T-cell (primary cell): ENCODE measurements at regions of chr15 and their contacts with region 1.

Region 1: GRCh38 chr15:85289677-85290365 is 90.6 kb upstream of the AKAP13 start:
- DNase-seq: peak in 13 of 35 experiments; percentile 2 to 60 (median 5)
- ATAC-seq: peak in 1 of 4 experiments; percentile 32
- H3K4me3 ChIP-seq: no peak overlapping the region
- H3K4me3 Mint-ChIP-seq: no peak overlapping the region
- H3K27ac ChIP-seq: no peak overlapping the region
- H3K27ac Mint-ChIP-seq: no peak overlapping the region
- H3K4me1 ChIP-seq: no peaks in the 10 kb centered on the region
- H3K4me1 Mint-ChIP-seq: peaks cover 0 to 4% (median 0%) of the 10 kb centered on the region in 3 donors
- H3K27me3 ChIP-seq: peaks cover 0 to 9% of the 10 kb centered on the region in 2 experiments
- H3K27me3 Mint-ChIP-seq: peaks cover 10 to 14% of the 10 kb centered on the region in 2 donors

Region 2: DNA sequence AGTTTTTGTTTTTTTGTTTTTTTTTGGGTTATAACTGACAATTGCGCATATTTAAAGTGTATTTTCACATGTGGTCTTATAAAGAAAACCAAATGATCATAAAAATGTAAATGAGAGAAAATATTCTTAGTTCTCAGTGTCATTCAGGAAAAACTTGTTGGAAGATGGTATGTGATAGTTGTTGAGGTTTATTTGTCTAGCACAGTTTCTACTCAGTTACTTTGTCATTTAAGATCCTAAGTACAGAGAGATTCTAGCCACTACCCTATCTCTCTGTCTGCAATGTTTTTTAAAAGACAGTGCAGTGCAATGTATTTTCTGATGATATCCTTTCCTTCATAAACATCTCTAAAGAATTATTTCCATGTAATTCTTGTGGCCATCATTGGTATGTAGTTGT is 136.7 kb after region 1 on chr15:
- CTCF ChIA-PET with region 1: no interaction called
- POLR2A ChIA-PET with region 1: no interaction called
- DNase-seq: no peak
- ATAC-seq: no peak
- H3K4me3 ChIP-seq: no peak overlapping the region
- H3K4me3 Mint-ChIP-seq: no peak overlapping the region
- H3K27ac ChIP-seq: no peak overlapping the region
- H3K27ac Mint-ChIP-seq: no peak overlapping the region
- H3K4me1 ChIP-seq: peaks cover 3 to 28% of the 10 kb centered on the region in 2 experiments
- H3K4me1 Mint-ChIP-seq: peaks cover 91 to 94% (median 92%) of the 10 kb centered on the region in 3 donors
- H3K27me3 ChIP-seq: no peaks in the 10 kb centered on the region
- H3K27me3 Mint-ChIP-seq: no peaks in the 10 kb centered on the region

Region 3: GRCh38 chr15:85477730-85478129 is 187.9 kb after region 1 on chr15:
- CTCF ChIA-PET with region 1: no interaction called
- POLR2A ChIA-PET with region 1: interaction called in 1 of 2 experiments, 10 read pairs
- DNase-seq: no peak
- ATAC-seq: no peak
- H3K4me3 ChIP-seq: no peak overlapping the region
- H3K4me3 Mint-ChIP-seq: no peak overlapping the region
- H3K27ac ChIP-seq: no peak overlapping the region
- H3K27ac Mint-ChIP-seq: peak overlapping the region; percentile 0 to 64
- H3K4me1 ChIP-seq: peaks cover 21 to 27% of the 10 kb centered on the region in 2 experiments
- H3K4me1 Mint-ChIP-seq: peaks cover 94 to 97% (median 96%) of the 10 kb centered on the region in 3 donors
- H3K27me3 ChIP-seq: no peaks in the 10 kb centered on the region
- H3K27me3 Mint-ChIP-seq: no peaks in the 10 kb centered on the region